ENCODE measurements at regions of chr13 and their contacts with region 1.

Region 1: GRCh38 chr13:30526612-30527495 is 61.1 kb upstream of the HMGB1 start:
- DNase-seq: peak in 1 of 2 experiments; percentile 47
- H3K4me3 ChIP-seq: no peak overlapping the region
- H3K4me3 Mint-ChIP-seq: no peak overlapping the region
- H3K27ac Mint-ChIP-seq: no peak overlapping the region
- H3K4me1 ChIP-seq: peaks cover 7% of the 10 kb centered on the region
- H3K4me1 Mint-ChIP-seq: peaks cover 7% of the 10 kb centered on the region
- H3K27me3 ChIP-seq: no peaks in the 10 kb centered on the region; the same call in 1 of the 2 replicates
- H3K27me3 Mint-ChIP-seq: no peaks in the 10 kb centered on the region
- CTCF ChIP-seq: no peak

Region 2: DNA sequence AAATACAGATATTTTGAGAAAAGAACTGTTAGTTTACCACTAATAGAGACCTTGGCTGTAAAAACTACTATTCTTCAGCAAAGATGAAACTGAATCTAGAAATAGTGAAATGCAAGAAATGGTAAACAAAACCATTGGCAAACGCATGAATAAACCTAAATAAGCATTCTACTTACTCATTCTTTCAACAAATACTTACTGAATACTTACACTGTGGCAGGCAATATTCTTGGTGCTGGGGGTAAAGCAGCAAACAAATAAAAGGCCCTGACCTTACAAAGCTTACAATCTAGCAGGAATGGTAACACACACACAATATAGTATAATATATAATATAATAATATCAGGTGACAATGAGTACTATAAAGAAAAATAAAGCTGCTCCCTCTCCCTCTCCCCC is 258.2 kb before region 1 on chr13:
- CTCF ChIA-PET with region 1: no interaction called
- POLR2A ChIA-PET with region 1: no interaction called
- intact Hi-C with region 1: no loop called
- DNase-seq: no peak
- H3K4me3 ChIP-seq: no peak overlapping the region
- H3K4me3 Mint-ChIP-seq: no peak overlapping the region
- H3K27ac Mint-ChIP-seq: no peak overlapping the region
- H3K4me1 ChIP-seq: no peaks in the 10 kb centered on the region
- H3K4me1 Mint-ChIP-seq: no peaks in the 10 kb centered on the region
- H3K27me3 ChIP-seq: no peaks in the 10 kb centered on the region
- H3K27me3 Mint-ChIP-seq: no peaks in the 10 kb centered on the region
- CTCF ChIP-seq: no peak

Region 3: GRCh38 chr13:30564489-30564888 is 37.6 kb after region 1 on chr13:
- CTCF ChIA-PET with region 1: interaction called, 10 read pairs
- POLR2A ChIA-PET with region 1: no interaction called
- intact Hi-C with region 1: no loop called
- DNase-seq: no peak
- H3K4me3 ChIP-seq: no peak overlapping the region
- H3K4me3 Mint-ChIP-seq: no peak overlapping the region
- H3K27ac Mint-ChIP-seq: no peak overlapping the region
- H3K4me1 ChIP-seq: no peaks in the 10 kb centered on the region
- H3K4me1 Mint-ChIP-seq: no peaks in the 10 kb centered on the region
- H3K27me3 ChIP-seq: no peaks in the 10 kb centered on the region
- H3K27me3 Mint-ChIP-seq: no peaks in the 10 kb centered on the region
- CTCF ChIP-seq: no peak

Region 4: GRCh38 chr13:30690282-30691188 is 163.7 kb after region 1 on chr13:
- CTCF ChIA-PET with region 1: no interaction called
- POLR2A ChIA-PET with region 1: no interaction called
- intact Hi-C with region 1: no loop called
- DNase-seq: peak in 1 of 2 experiments; percentile 11
- H3K4me3 ChIP-seq: peak overlapping the region; percentile 31
- H3K4me3 Mint-ChIP-seq: peak overlapping the region; percentile 72
- H3K27ac Mint-ChIP-seq: peak overlapping the region; percentile 40
- H3K4me1 ChIP-seq: no peaks in the 10 kb centered on the region
- H3K4me1 Mint-ChIP-seq: no peaks in the 10 kb centered on the region
- H3K27me3 ChIP-seq: no peaks in the 10 kb centered on the region
- H3K27me3 Mint-ChIP-seq: peaks cover 3% of the 10 kb centered on the region
- CTCF ChIP-seq: no peak